ENCODE measurements at regions of chr13 and their contacts with region 1.

Region 1: DNA sequence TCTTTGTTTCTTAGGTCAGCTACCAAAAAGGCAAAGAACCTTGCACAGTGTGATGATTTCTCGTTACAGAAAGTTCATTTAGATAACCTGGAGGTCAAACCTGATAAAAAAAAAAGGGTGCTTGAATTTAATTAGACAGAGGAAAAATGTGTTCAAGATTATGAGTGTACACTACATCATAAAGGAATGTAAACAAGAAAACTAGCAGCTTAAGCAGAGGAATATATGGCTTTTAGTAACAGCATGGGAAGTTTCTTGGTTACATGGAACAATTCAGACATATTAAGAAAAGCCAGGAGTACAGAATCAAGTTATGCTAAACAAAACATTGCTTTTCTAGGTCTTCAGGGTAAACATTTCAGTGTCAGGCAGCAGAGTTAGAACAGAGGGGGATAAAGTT is 32.9 kb downstream of the ING1 start:
- DNase-seq: no peak
- CTCF ChIP-seq: no peak

Region 2: DNA sequence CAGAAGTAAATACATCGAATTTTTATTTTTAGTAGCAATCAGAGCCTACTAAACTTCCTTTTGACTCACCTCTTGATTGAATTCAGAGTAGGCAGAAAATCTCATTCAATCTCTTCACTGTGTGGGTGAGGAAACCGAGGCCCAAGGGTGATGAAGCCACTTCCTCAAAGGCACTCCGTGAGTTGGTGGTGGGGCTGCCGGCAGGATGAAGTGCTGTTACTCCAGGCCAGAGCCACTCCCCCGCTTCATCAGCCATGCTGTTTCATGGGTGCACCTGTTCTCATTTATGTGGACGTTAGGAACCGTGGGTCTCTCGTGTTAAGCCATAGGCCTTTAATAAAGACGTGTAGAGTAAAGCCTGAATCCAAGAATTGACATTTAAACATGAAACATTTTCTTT is 19.7 kb before region 1 on chr13:
- CTCF ChIA-PET with region 1: interaction called, 3 read pairs
- POLR2A ChIA-PET with region 1: interaction called, 12 read pairs
- DNase-seq: peak; percentile 53
- CTCF ChIP-seq: no peak